CD4-positive, alpha-beta T cell (primary cell): ENCODE measurements at regions of chr2 and their contacts with region 1.

Region 1: DNA sequence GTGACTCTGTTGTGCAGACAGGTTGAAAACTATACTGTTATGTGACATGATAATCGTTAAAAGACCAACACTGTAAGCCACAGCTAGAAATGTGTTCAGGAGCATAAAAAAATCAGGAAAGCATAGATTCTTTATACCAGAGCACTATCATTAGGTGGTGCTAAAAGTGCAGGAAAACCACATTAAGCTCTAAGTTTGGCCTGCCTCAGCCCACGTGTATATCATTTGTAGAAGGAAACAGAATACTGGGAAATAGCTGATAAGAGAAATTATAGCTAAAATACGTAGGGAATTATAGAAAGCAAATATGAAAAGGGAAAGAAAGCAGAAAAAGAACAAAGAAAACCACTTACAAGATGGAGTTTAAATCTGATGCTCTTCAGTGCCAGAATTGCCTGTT is 26.5 kb upstream of the C2orf74 start:
- DNase-seq: peak in 4 of 14 experiments; percentile 13 to 36 (median 34)
- ATAC-seq: no peak
- H3K4me3 ChIP-seq: no peak overlapping the region
- H3K4me3 Mint-ChIP-seq: no peak overlapping the region
- H3K27ac ChIP-seq: no peak overlapping the region
- H3K27ac Mint-ChIP-seq: no peak overlapping the region
- H3K4me1 ChIP-seq: no peaks in the 10 kb centered on the region
- H3K4me1 Mint-ChIP-seq: no peaks in the 10 kb centered on the region
- H3K27me3 ChIP-seq: no peaks in the 10 kb centered on the region
- H3K27me3 Mint-ChIP-seq: no peaks in the 10 kb centered on the region
- CTCF ChIP-seq: peak; percentile 59

Region 2: DNA sequence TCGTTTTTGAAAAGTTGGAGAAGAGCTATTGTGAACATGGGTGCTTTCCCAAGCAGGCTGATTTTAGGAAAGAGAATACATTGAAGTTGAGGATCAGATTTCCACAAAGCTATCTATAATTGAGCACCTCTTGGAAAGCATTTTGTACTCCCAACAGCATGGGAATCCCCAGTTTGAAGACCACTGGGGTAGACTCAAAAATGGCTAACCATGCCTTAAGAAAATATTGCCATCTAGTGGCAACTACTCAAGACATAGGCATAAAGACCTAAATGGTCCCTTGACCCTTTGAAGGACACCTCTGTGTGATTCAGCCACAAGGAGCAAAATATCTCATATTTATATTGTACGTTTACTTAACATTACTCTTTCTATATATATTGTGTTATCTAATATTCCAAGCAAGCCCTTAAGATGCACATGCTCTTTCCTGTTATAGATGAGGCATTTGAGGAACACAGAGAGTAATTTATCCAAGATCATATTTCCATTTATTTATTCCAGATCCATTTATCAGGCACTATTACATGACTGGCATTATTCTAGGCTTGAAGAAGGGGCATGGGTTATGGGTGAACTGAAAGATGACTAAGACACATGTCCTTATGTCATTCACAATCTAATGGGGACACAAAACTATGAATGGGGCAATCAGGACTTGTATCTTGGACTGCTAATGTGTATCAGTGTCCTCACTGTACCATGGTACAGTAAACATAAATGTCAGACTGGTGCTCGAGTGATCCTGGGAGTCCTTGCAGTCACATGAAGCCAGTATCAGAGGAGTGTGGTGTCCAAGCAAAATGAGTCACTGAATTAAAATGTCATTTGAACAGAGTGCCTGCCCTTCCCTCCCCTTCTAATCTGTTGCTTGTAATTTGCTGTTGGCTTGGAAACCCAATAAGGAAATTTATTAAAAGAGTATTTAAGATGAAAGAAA is 523.6 kb after region 1 on chr2:
- CTCF ChIA-PET with region 1: no interaction called
- POLR2A ChIA-PET with region 1: no interaction called
- intact Hi-C with region 1: loop called in 1 of 2 experiments (anchors 10 kb)
- DNase-seq: peak in 3 of 14 experiments; percentile 19 to 29 (median 25)
- ATAC-seq: no peak
- H3K4me3 ChIP-seq: no peak overlapping the region
- H3K4me3 Mint-ChIP-seq: no peak overlapping the region
- H3K27ac ChIP-seq: no peak overlapping the region
- H3K27ac Mint-ChIP-seq: no peak overlapping the region
- H3K4me1 ChIP-seq: no peaks in the 10 kb centered on the region
- H3K4me1 Mint-ChIP-seq: no peaks in the 10 kb centered on the region
- H3K27me3 ChIP-seq: no peaks in the 10 kb centered on the region
- H3K27me3 Mint-ChIP-seq: no peaks in the 10 kb centered on the region
- CTCF ChIP-seq: peak; percentile 52

Region 3: GRCh38 chr2:61789807-61790602 is 654.5 kb after region 1 on chr2:
- CTCF ChIA-PET with region 1: no interaction called
- POLR2A ChIA-PET with region 1: no interaction called
- intact Hi-C with region 1: loop called in 1 of 2 experiments (anchors 10 kb)
- DNase-seq: no peak
- ATAC-seq: no peak
- H3K4me3 ChIP-seq: no peak overlapping the region
- H3K4me3 Mint-ChIP-seq: no peak overlapping the region
- H3K27ac ChIP-seq: no peak overlapping the region
- H3K27ac Mint-ChIP-seq: no peak overlapping the region
- H3K4me1 ChIP-seq: peaks cover 4% of the 10 kb centered on the region
- H3K4me1 Mint-ChIP-seq: no peaks in the 10 kb centered on the region
- H3K27me3 ChIP-seq: no peaks in the 10 kb centered on the region
- H3K27me3 Mint-ChIP-seq: peaks cover 19% of the 10 kb centered on the region
- CTCF ChIP-seq: no peak